ENCODE measurements at regions of chr2 and their contacts with region 1.

Region 1: DNA sequence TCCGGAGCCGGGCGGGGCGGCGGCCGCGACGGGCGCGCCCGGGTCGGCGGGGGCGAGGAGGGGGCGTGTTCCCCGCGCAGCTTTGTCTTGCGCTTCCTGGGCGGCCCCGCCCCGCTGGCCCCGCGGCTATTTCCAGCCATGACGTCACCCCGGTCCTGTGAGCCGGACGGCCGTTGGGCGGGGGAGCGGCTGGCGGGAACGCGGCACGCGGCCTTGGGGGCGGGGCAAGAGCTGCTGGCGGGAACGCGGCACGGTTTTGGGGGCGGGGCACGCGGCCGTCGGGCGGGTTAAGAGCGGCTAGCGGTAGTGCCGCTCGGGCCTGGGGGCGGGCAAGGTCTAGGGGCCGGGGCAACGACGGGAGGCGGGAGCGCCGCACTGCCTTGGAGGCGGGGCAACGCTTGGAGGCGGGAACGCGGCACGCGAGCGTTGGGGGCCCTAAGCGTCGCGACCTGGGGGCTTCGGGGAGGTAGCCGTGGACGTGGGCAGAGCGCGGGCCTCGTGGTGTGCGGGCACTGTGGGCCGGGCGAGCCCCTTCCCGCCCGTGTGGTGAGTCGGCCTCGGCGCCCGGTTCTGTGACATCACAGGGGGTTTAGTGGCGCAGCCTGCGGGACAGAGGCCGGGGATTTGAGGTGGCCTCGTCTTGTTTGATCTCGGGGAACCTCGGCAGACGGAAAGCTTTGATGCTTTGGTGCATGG is 704 bp downstream of the KLF11 start:
- DNase-seq: peak; percentile 92 to 97 (median 95)
- H3K4me3 ChIP-seq: peak overlapping the region in 1 of 2 donors; percentile 43
- H3K4me3 Mint-ChIP-seq: peak overlapping the region; percentile 69 to 86 (median 84)
- H3K27ac ChIP-seq: peak overlapping the region; percentile 66
- H3K27ac Mint-ChIP-seq: peak overlapping the region; percentile 90 to 99 (median 98)
- H3K4me1 ChIP-seq: peaks cover 21% of the 10 kb centered on the region
- H3K4me1 Mint-ChIP-seq: peaks cover 18 to 45% (median 27%) of the 10 kb centered on the region in 4 donors
- H3K27me3 ChIP-seq: no peaks in the 10 kb centered on the region
- H3K27me3 Mint-ChIP-seq: no peaks in the 10 kb centered on the region

Region 2: GRCh38 chr2:9423100-9423921 is 620.7 kb before region 1 on chr2 and contains the starts of genes CPSF3 and ITGB1BP1:
- CTCF ChIA-PET with region 1: no interaction called
- POLR2A ChIA-PET with region 1: interaction called, 3 read pairs
- intact Hi-C with region 1: loop called (anchors 10 kb)
- DNase-seq: peak; percentile 93 to 95 (median 94)
- H3K4me3 ChIP-seq: peak within 1 kb of the TSS; percentile 77 to 97
- H3K4me3 Mint-ChIP-seq: peak within 1 kb of the TSS in 5 of 8 donors; percentile 91 to 93 (median 91)
- H3K27ac ChIP-seq: peak within 1 kb of the TSS; percentile 88
- H3K27ac Mint-ChIP-seq: peak within 1 kb of the TSS in 6 of 7 donors; percentile 85 to 95 (median 94)
- H3K4me1 ChIP-seq: peaks cover 43% of the 10 kb centered on the region
- H3K4me1 Mint-ChIP-seq: peaks cover 24 to 30% (median 28%) of the 10 kb centered on the region in 4 donors
- H3K27me3 ChIP-seq: no peaks in the 10 kb centered on the region
- H3K27me3 Mint-ChIP-seq: no peaks in the 10 kb centered on the region
- total RNA-seq, gene CPSF3: 20.9 to 22.4 TPM
- total RNA-seq, gene ITGB1BP1: 55.1 to 55.8 TPM

Region 3: GRCh38 chr2:9725106-9725505 is 318.9 kb before region 1 on chr2:
- CTCF ChIA-PET with region 1: no interaction called
- POLR2A ChIA-PET with region 1: no interaction called
- intact Hi-C with region 1: no loop called
- DNase-seq: no peak
- H3K4me3 ChIP-seq: no peak overlapping the region
- H3K4me3 Mint-ChIP-seq: no peak overlapping the region
- H3K27ac ChIP-seq: no peak overlapping the region
- H3K27ac Mint-ChIP-seq: peak overlapping the region in 1 of 7 donors; percentile 27
- H3K4me1 ChIP-seq: no peaks in the 10 kb centered on the region
- H3K4me1 Mint-ChIP-seq: peaks cover 0 to 9% (median 4%) of the 10 kb centered on the region in 4 donors
- H3K27me3 ChIP-seq: no peaks in the 10 kb centered on the region
- H3K27me3 Mint-ChIP-seq: no peaks in the 10 kb centered on the region

Region 4: DNA sequence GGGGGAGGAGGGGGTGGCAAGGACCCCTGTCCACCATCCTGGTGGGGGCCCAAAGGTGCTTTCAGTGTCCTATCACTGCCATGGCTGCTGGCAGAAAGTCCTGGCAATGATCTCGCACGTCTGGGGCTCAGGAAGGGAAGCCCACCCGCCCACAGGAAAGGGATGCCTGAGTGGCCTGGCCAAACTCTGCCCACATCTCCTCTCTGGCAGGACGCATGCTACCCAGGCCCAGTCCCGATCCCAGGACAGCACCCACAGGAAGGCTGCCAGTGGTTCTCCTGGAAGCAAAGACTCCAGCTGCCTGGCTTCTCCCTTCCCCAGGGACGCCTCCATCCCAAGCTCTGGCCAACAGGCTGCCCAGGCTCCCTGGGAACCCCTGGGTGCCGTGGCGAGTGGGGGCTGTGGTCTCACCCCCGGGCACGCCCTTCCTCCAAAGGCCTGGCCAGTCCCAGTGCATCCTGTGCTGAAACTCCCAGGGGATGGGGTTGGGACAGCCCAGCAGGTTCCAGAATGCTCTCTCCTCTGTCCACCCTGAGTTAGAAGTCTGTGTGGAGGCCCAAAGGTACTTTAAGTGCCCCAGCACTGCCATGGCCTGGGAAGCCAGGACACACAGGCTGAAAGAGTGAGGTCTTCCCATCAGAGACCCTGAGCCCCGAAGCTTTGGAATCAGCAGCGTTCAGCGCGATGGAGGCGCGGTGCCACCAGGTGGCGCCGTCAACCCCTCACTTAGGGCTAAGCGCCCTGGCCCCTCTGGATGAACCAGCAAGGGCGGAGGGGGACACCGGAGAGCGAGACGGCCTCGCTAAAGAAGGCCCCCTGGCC is 230.5 kb before region 1 on chr2:
- CTCF ChIA-PET with region 1: interaction called, 125 read pairs
- POLR2A ChIA-PET with region 1: interaction called, 3 read pairs
- intact Hi-C with region 1: loop called (anchors 1 kb)
- DNase-seq: peak; percentile 43 to 64 (median 58)
- H3K4me3 ChIP-seq: no peak overlapping the region
- H3K4me3 Mint-ChIP-seq: no peak overlapping the region
- H3K27ac ChIP-seq: no peak overlapping the region
- H3K27ac Mint-ChIP-seq: peak overlapping the region in 1 of 7 donors; percentile 77
- H3K4me1 ChIP-seq: peaks cover 6% of the 10 kb centered on the region
- H3K4me1 Mint-ChIP-seq: peaks cover 9 to 16% (median 12%) of the 10 kb centered on the region in 4 donors
- H3K27me3 ChIP-seq: no peaks in the 10 kb centered on the region
- H3K27me3 Mint-ChIP-seq: peaks cover 2 to 5% of the 10 kb centered on the region in 2 donors

Region 5: GRCh38 chr2:9951272-9951972 is 92.6 kb before region 1 on chr2 and contains the start of gene GRHL1:
- CTCF ChIA-PET with region 1: no interaction called
- POLR2A ChIA-PET with region 1: no interaction called
- intact Hi-C with region 1: loop called (anchors 1 kb)
- DNase-seq: peak; percentile 85 to 92 (median 91)
- H3K4me3 ChIP-seq: peak within 1 kb of the TSS in 1 of 2 donors; percentile 58
- H3K4me3 Mint-ChIP-seq: peak within 1 kb of the TSS; percentile 80 to 91 (median 88)
- H3K27ac ChIP-seq: peak within 1 kb of the TSS; percentile 51
- H3K27ac Mint-ChIP-seq: peak within 1 kb of the TSS; percentile 15 to 73 (median 61)
- H3K4me1 ChIP-seq: peaks cover 13% of the 10 kb centered on the region
- H3K4me1 Mint-ChIP-seq: peaks cover 0 to 5% (median 4%) of the 10 kb centered on the region in 4 donors
- H3K27me3 ChIP-seq: no peaks in the 10 kb centered on the region
- H3K27me3 Mint-ChIP-seq: peaks cover 7 to 16% of the 10 kb centered on the region in 2 donors
- total RNA-seq, gene GRHL1: 0.33 to 0.49 TPM

Region 6: GRCh38 chr2:10019602-10020400 is 24.3 kb before region 1 on chr2:
- CTCF ChIA-PET with region 1: interaction called, 13 read pairs
- POLR2A ChIA-PET with region 1: no interaction called
- intact Hi-C with region 1: no loop called
- DNase-seq: no peak
- H3K4me3 ChIP-seq: no peak overlapping the region
- H3K4me3 Mint-ChIP-seq: no peak overlapping the region
- H3K27ac ChIP-seq: no peak overlapping the region
- H3K27ac Mint-ChIP-seq: no peak overlapping the region
- H3K4me1 ChIP-seq: no peaks in the 10 kb centered on the region
- H3K4me1 Mint-ChIP-seq: peaks cover 0 to 3% (median 0%) of the 10 kb centered on the region in 4 donors
- H3K27me3 ChIP-seq: no peaks in the 10 kb centered on the region
- H3K27me3 Mint-ChIP-seq: peaks cover 0 to 2% of the 10 kb centered on the region in 2 donors

Region 7: GRCh38 chr2:10072656-10073480 is 28.8 kb after region 1 on chr2:
- CTCF ChIA-PET with region 1: interaction called, 10 read pairs
- POLR2A ChIA-PET with region 1: no interaction called
- intact Hi-C with region 1: no loop called
- DNase-seq: peak; percentile 77 to 81 (median 79)
- H3K4me3 ChIP-seq: no peak overlapping the region
- H3K4me3 Mint-ChIP-seq: no peak overlapping the region
- H3K27ac ChIP-seq: no peak overlapping the region
- H3K27ac Mint-ChIP-seq: no peak overlapping the region
- H3K4me1 ChIP-seq: no peaks in the 10 kb centered on the region
- H3K4me1 Mint-ChIP-seq: peaks cover 3 to 7% (median 4%) of the 10 kb centered on the region in 4 donors
- H3K27me3 ChIP-seq: peaks cover 2% of the 10 kb centered on the region
- H3K27me3 Mint-ChIP-seq: peaks cover 27 to 35% of the 10 kb centered on the region in 2 donors